ENCODE measurements at regions of chr5 and their contacts with region 1.

Region 1: DNA sequence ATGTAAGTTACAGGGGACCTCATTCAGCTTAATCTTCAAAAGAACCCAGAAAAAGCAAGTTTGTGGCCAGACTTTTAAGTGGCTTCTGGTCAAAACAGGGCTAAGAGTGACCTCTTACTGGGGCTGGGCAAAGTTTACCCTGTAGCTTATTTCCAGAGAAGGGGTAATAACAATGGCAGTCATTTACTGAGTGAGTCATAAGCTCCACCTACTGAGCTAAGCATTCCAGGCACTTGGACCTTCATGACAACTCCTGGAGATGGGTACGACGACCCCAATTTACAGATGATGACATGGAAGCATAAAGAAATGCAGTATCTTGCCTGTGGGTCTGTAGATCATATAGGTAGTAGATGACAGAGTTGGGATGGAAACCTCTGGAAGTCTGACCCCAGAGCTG is 4.7 kb upstream of the GPR151 start:
- DNase-seq: no peak
- ATAC-seq: no peak
- H3K4me3 Mint-ChIP-seq: no peak overlapping the region
- H3K27ac Mint-ChIP-seq: no peak overlapping the region
- H3K4me1 Mint-ChIP-seq: peaks cover 4% of the 10 kb centered on the region
- H3K27me3 Mint-ChIP-seq: peaks cover 31% of the 10 kb centered on the region

Region 2: DNA sequence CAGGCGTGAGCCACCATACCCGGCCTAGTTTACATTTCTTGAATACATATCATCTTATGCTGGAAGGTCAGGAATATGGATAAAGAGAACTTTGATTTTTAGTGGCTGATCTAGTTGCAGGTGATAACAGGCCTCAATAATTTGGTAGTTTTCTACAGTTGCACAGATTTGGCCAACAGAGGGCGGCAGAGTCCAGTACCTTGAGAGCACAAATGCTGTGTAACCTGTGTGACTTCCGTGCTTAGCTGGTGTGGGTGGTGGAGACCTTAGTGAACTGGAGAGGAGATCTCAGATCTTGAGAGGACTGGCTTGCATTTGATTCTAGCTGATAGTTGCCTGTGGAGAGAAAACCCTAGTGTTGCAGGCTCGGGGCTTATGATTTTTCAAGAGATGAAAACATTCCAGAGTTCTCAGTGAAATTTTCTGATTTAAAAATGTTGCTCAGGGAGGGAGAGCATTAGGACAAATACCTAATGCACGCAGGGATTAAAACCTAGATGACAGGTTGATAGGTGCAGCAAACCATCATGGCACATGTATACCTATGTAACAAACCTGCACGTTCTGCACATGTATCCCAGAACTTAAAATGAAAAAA is 12.6 kb after region 1 on chr5:
- CTCF ChIA-PET with region 1: interaction called, 19 read pairs
- DNase-seq: peak; percentile 86
- ATAC-seq: peak; percentile 91
- H3K4me3 Mint-ChIP-seq: no peak overlapping the region
- H3K27ac Mint-ChIP-seq: no peak overlapping the region
- H3K4me1 Mint-ChIP-seq: peaks cover 14% of the 10 kb centered on the region
- H3K27me3 Mint-ChIP-seq: peaks cover 3% of the 10 kb centered on the region

Region 3: GRCh38 chr5:146699664-146700418 is 179.1 kb after region 1 on chr5:
- CTCF ChIA-PET with region 1: no interaction called
- DNase-seq: no peak
- ATAC-seq: no peak
- H3K4me3 Mint-ChIP-seq: no peak overlapping the region
- H3K27ac Mint-ChIP-seq: no peak overlapping the region
- H3K4me1 Mint-ChIP-seq: peaks cover 19% of the 10 kb centered on the region
- H3K27me3 Mint-ChIP-seq: no peaks in the 10 kb centered on the region

Measured in activated CD8-positive, alpha-beta memory T cell treated with anti-CD3 and anti-CD28 coated beads, Interleukin-2, amount 10 ng/mL, durations not matched to agents 7 days and 5 days (primary cell).